Activated B cell treated with CpG ODN at 0.5 μM for 24 hours (primary cell): ENCODE measurements at regions of chr6 and their contacts with region 1.

Region 1: GRCh38 chr6:75284632-75285286 is at the start of gene TMEM30A:
- DNase-seq: peak; percentile 84
- ATAC-seq: peak; percentile 96
- H3K4me3 Mint-ChIP-seq: no peak within 1 kb of the TSS
- H3K27ac Mint-ChIP-seq: no peak within 1 kb of the TSS
- H3K4me1 Mint-ChIP-seq: peaks cover 27% of the 10 kb centered on the region
- H3K27me3 Mint-ChIP-seq: no peaks in the 10 kb centered on the region
- CTCF ChIP-seq: no peak
- total RNA-seq, gene TMEM30A: 36.8 and 38.7 TPM in 2 replicates

Region 2: GRCh38 chr6:73451223-73452107 is 1833.3 kb before region 1 on chr6:
- CTCF ChIA-PET with region 1: no interaction called
- POLR2A ChIA-PET with region 1: no interaction called
- intact Hi-C with region 1: loop called (anchors 5 kb)
- DNase-seq: peak; percentile 54
- ATAC-seq: peak; percentile 59
- H3K4me3 Mint-ChIP-seq: peak overlapping the region; percentile 93
- H3K27ac Mint-ChIP-seq: peak overlapping the region; percentile 91
- H3K4me1 Mint-ChIP-seq: peaks cover 22% of the 10 kb centered on the region
- H3K27me3 Mint-ChIP-seq: no peaks in the 10 kb centered on the region
- CTCF ChIP-seq: no peak

Region 3: DNA sequence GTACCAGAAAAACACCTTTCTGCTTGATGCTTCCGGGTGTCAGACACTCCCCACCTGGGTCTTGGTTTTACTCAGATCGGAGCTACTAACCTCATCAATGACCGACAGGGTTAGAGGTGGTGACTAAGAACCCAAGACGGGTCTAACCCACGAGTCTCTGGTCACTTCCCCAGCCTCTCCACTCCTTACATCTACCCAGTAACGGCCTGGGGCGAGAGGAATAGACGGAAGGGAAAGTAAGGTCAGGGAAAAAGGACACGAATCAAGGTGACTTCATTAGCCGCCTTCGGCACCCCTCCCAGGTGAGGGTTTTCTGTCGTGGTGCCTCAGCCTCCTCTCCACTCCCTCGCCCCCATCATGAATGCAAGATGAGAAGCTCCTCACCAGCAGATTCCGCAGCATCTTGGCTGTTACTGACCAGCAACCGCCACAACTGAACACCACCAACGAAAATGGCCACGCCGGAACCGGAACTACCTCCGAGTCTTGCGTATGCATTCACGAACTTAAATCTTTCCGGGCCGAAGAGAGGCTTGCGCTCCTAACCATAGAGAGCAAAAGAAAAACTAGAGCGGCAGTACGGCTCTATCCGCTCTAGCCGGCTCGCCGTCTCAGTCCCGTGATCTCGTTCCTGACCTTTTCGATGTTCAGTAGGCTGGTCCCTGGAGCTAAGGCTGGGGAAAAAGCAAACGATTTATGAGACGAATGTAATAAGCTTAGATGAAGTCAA is 41.3 kb before region 1 on chr6 and contains the start of gene COX7A2:
- CTCF ChIA-PET with region 1: no interaction called
- POLR2A ChIA-PET with region 1: interaction called, 36 read pairs
- intact Hi-C with region 1: loop called (anchors 1 kb)
- DNase-seq: peak; percentile 77
- ATAC-seq: peak; percentile 97
- H3K4me3 Mint-ChIP-seq: peak within 1 kb of the TSS; percentile 94
- H3K27ac Mint-ChIP-seq: peak within 1 kb of the TSS; percentile 95
- H3K4me1 Mint-ChIP-seq: peaks cover 21% of the 10 kb centered on the region
- H3K27me3 Mint-ChIP-seq: peaks cover 13% of the 10 kb centered on the region
- CTCF ChIP-seq: no peak
- total RNA-seq, gene COX7A2: 259 and 301 TPM in 2 replicates

Region 4: GRCh38 chr6:75266716-75267291 is 18.0 kb before region 1 on chr6:
- CTCF ChIA-PET with region 1: interaction called, 10 read pairs
- POLR2A ChIA-PET with region 1: no interaction called
- intact Hi-C with region 1: loop called (anchors 2 kb)
- DNase-seq: no peak
- ATAC-seq: peak; percentile 77
- H3K4me3 Mint-ChIP-seq: no peak overlapping the region
- H3K27ac Mint-ChIP-seq: no peak overlapping the region
- H3K4me1 Mint-ChIP-seq: peaks cover 11% of the 10 kb centered on the region
- H3K27me3 Mint-ChIP-seq: no peaks in the 10 kb centered on the region
- CTCF ChIP-seq: peak; percentile 98

Region 5: DNA sequence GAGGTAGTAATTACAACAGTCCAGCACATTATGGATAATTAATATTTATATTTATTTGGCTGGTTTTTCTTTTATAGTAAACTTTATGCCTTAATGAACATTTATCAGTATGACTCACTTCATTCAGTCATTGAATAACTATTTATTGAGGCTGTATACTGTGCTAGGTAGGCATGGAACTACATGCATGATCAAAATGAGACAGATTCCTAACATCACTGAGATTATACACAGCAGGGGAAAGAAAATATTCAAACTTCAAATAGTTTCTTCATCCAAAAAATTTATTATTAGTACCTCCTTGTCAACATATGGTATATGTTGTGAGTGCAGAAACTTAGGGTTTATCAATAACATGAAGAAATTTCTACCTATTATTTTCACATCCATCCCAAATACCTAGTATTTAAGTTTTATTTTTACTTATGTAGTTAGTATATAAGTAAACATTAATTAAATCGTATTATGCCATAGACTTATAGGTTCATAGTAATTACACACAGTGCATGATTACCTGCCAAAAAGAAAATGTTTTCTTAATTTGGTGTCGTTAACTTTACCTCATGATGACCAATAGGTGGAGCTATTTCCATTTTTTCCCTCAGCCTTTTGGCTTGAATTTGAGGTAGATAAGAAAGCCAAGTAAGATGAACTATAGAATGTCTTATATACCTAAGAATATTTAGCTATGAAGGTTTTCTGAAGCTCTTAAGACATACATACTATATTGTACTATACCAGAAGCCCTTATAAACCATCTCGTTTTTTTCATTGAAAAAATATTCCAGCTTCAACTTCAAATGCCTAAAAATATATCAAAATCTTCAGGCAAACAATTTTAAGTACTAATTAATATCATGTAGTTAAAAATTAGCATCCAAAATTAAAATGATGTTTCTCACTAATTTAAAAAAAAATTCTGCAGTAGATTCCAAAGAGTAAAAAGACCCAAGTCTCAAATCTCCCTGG is 12.3 kb after region 1 on chr6:
- CTCF ChIA-PET with region 1: interaction called, 3 read pairs
- POLR2A ChIA-PET with region 1: no interaction called
- intact Hi-C with region 1: loop called (anchors 1 kb)
- DNase-seq: no peak
- ATAC-seq: peak; percentile 45
- H3K4me3 Mint-ChIP-seq: no peak overlapping the region
- H3K27ac Mint-ChIP-seq: no peak overlapping the region
- H3K4me1 Mint-ChIP-seq: no peaks in the 10 kb centered on the region
- H3K27me3 Mint-ChIP-seq: no peaks in the 10 kb centered on the region
- CTCF ChIP-seq: peak; percentile 66

Region 6: DNA sequence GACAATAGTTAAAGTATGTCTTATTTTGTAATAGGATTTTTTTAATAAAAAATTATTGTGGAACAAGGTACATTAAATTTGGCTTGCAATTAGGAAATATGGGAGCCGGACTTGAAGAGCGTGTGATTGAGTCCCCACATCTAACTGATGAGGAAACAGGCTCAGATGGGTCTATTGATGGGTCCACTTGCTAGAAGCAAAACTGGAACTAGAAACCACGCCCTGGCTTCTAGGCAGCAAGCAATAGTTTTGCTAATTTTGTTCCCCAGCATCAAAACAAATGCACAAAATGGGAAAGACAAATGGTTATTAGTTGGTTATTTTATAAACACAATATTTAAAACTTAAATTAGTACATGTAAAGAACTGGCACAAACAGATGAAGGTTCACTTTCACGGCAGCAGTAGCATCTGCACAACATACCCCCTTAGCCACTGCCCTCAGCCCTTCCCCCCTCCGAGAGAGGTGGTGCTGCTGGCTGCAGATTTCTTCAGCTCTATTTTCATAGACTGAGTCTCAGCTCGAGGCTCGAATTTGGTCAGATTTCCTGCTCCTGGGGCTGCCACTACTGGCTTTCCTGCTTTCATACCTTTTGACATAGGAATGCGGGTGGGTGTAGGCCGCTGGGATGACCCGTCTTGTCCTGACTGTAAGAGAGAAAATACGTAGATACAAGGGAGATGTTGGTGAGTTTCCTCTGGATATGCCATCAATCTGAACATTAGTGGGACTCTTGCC is 23.7 kb after region 1 on chr6:
- CTCF ChIA-PET with region 1: no interaction called
- POLR2A ChIA-PET with region 1: no interaction called
- intact Hi-C with region 1: no loop called
- DNase-seq: no peak
- ATAC-seq: no peak
- H3K4me3 Mint-ChIP-seq: no peak overlapping the region
- H3K27ac Mint-ChIP-seq: no peak overlapping the region
- H3K4me1 Mint-ChIP-seq: no peaks in the 10 kb centered on the region
- H3K27me3 Mint-ChIP-seq: peaks cover 12% of the 10 kb centered on the region
- CTCF ChIP-seq: no peak

Region 7: DNA sequence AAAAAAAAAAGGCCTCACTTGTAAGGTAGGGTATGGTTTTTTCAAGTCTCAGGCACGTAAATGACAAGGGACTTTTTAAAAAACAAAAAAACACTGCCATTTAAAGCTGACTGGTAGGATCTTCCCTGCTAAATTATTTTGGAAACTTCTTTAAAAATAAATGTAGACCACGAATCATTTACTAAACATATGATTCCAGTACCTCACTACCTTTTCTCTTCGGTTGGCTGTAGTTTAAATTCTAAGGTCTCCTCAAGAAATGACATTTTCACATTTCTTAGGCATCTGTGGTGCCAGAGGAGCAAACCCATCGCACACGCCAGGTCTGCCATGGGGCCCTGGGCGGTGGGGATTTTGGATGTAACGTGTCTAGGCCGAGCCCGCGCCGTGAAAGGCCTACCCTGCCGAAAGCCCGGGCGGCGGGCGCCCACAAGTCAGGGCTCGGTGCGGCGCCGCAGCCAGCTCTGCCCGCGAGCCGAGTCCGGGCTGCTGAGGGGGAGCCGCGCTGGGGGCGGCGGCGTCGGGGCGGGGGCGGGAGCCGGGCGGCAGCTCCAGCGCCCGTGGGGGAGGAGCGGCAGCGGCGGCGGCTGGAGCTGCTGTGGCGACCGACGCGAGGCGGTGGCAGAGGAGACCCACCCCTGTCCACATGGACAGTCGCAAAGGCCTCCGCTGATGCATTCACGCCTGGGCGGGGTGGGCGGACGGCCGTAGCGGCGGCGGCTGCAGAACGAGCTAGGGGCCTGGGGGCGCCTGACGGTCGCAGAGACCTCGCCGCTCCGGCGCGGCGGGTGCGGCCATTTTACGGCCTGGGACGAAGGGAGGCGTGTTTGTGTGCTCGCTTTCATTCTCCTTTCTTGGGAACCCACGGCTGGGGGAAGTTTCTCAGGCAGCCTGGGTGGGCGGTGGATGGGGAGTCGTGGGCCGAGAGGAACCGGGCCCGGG is 316.8 kb after region 1 on chr6 and contains the start of gene SENP6:
- CTCF ChIA-PET with region 1: no interaction called
- POLR2A ChIA-PET with region 1: interaction called, 21 read pairs
- intact Hi-C with region 1: loop called (anchors 1 kb)
- DNase-seq: peak; percentile 78
- ATAC-seq: peak; percentile 79
- H3K4me3 Mint-ChIP-seq: peak within 1 kb of the TSS; percentile 98
- H3K27ac Mint-ChIP-seq: peak within 1 kb of the TSS; percentile 98
- H3K4me1 Mint-ChIP-seq: peaks cover 70% of the 10 kb centered on the region
- H3K27me3 Mint-ChIP-seq: no peaks in the 10 kb centered on the region
- CTCF ChIP-seq: no peak
- total RNA-seq, gene SENP6: 116 and 134 TPM in 2 replicates

Region 8: DNA sequence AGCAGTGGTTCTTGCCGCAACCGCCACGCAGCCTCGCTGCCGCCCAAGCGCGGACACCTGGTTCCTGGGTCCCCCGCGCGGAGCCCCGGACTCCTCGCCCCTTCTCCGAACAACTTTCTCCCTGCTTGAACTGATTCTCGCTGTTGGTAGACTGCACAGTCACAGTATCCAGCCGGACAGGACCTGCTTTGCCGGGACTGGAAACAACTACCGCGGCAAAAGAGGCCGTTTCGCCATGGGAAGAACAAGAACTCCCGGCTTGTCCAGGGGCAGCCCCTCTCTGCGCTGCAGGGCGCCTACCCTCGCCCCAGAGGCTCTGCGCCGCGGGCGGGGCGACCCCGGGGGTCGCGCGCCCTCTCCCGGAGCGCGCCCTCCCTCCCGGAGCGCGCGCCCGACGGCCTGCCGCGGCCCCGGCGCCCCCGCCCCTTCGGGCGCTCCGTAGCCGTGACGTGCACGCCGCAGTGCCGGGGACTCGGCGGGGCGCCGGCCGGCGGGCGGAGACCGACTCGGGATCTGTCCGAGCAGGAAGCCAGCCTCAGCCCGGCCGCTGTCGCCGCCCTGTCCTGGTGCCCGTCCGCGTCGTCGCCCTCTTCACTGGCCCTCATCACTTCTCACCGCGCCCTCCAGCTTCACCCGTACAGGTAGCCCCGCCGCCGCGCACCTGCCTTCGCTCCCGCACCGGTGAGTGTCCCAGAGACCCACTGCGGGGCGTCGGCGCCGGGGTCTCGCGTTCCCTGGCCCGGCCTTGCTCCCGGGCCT is 464.2 kb after region 1 on chr6 and contains the start of gene MYO6:
- CTCF ChIA-PET with region 1: no interaction called
- POLR2A ChIA-PET with region 1: no interaction called
- intact Hi-C with region 1: loop called (anchors 5 kb)
- DNase-seq: peak; percentile 45
- ATAC-seq: peak; percentile 75
- H3K4me3 Mint-ChIP-seq: peak within 1 kb of the TSS; percentile 85
- H3K27ac Mint-ChIP-seq: no peak within 1 kb of the TSS
- H3K4me1 Mint-ChIP-seq: peaks cover 20% of the 10 kb centered on the region
- H3K27me3 Mint-ChIP-seq: peaks cover 40% of the 10 kb centered on the region
- CTCF ChIP-seq: no peak
- total RNA-seq, gene MYO6: 0.42 and 0.44 TPM in 2 replicates

Region 9: GRCh38 chr6:76671751-76672150 is 1387.0 kb after region 1 on chr6:
- CTCF ChIA-PET with region 1: no interaction called
- POLR2A ChIA-PET with region 1: no interaction called
- intact Hi-C with region 1: no loop called
- DNase-seq: no peak
- ATAC-seq: no peak
- H3K4me3 Mint-ChIP-seq: no peak overlapping the region
- H3K27ac Mint-ChIP-seq: no peak overlapping the region
- H3K4me1 Mint-ChIP-seq: no peaks in the 10 kb centered on the region
- H3K27me3 Mint-ChIP-seq: no peaks in the 10 kb centered on the region
- CTCF ChIP-seq: no peak